B cell (primary cell): ENCODE measurements at regions of chrX and their contacts with region 1.

Region 1: GRCh38 chrX:123960042-123960611 is 1.4 kb upstream of the STAG2 start:
- DNase-seq: peak; percentile 93
- ATAC-seq: peak; percentile 74
- H3K4me3 ChIP-seq: peak overlapping the region; percentile 71 to 93 (median 91)
- H3K4me3 Mint-ChIP-seq: peak overlapping the region; percentile 88
- H3K27ac ChIP-seq: peak overlapping the region; percentile 94 to 100
- H3K27ac Mint-ChIP-seq: peak overlapping the region; percentile 94
- H3K4me1 ChIP-seq: peaks cover 7 to 14% of the 10 kb centered on the region in 2 donors
- H3K4me1 Mint-ChIP-seq: peaks cover 18% of the 10 kb centered on the region
- H3K27me3 ChIP-seq: no peaks in the 10 kb centered on the region
- H3K27me3 Mint-ChIP-seq: no peaks in the 10 kb centered on the region
- CTCF ChIP-seq: peak; percentile 77

Region 2: GRCh38 chrX:123833387-123833786 is 126.7 kb before region 1 on chrX:
- CTCF ChIA-PET with region 1: interaction called, 15 read pairs
- POLR2A ChIA-PET with region 1: no interaction called
- intact Hi-C with region 1: loop called (anchors 1 kb)
- DNase-seq: peak; percentile 70
- ATAC-seq: peak; percentile 72
- H3K4me3 ChIP-seq: no peak overlapping the region
- H3K4me3 Mint-ChIP-seq: no peak overlapping the region
- H3K27ac ChIP-seq: no peak overlapping the region
- H3K27ac Mint-ChIP-seq: no peak overlapping the region
- H3K4me1 ChIP-seq: peaks cover 11 to 18% of the 10 kb centered on the region in 2 donors
- H3K4me1 Mint-ChIP-seq: peaks cover 18% of the 10 kb centered on the region
- H3K27me3 ChIP-seq: no peaks in the 10 kb centered on the region
- H3K27me3 Mint-ChIP-seq: no peaks in the 10 kb centered on the region
- CTCF ChIP-seq: peak; percentile 78

Region 3: DNA sequence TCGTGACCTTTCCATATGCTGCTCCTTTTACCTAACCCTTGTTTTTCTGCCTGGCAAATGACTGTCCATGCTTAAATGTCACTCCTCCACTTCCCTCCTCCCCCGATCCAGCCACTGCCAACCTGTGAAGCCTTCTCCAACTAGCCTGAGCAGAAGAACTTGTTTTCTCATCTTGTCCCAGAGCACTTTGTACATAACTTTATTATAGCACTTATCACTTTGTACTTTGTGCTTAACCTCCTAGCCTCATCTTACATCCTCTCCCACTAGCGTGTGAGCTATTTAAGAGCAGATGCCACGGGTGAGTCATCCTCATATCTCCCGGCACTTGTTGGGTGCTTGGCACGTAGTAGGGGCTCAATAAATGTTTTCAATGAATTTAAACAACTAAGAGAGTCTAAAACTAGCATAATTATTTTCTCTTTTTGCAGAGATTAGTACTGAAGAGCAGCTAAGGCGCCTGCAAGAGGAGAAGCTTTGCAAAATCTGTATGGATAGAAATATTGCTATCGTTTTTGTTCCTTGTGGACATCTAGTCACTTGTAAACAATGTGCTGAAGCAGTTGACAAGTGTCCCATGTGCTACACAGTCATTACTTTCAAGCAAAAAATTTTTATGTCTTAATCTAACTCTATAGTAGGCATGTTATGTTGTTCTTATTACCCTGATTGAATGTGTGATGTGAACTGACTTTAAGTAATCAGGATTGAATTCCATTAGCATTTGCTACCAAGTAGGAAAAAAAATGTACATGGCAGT is 53.4 kb before region 1 on chrX:
- CTCF ChIA-PET with region 1: no interaction called
- POLR2A ChIA-PET with region 1: no interaction called
- intact Hi-C with region 1: loop called (anchors 5 kb)
- DNase-seq: no peak
- ATAC-seq: no peak
- H3K4me3 ChIP-seq: no peak overlapping the region
- H3K4me3 Mint-ChIP-seq: peak overlapping the region; percentile 6
- H3K27ac ChIP-seq: peak overlapping the region; percentile 24 to 62
- H3K27ac Mint-ChIP-seq: peak overlapping the region; percentile 86
- H3K4me1 ChIP-seq: peaks cover 24 to 27% of the 10 kb centered on the region in 2 donors
- H3K4me1 Mint-ChIP-seq: peaks cover 30% of the 10 kb centered on the region
- H3K27me3 ChIP-seq: no peaks in the 10 kb centered on the region
- H3K27me3 Mint-ChIP-seq: no peaks in the 10 kb centered on the region
- CTCF ChIP-seq: no peak

Region 4: GRCh38 chrX:124018023-124018422 is 57.9 kb after region 1 on chrX:
- CTCF ChIA-PET with region 1: interaction called, 18 read pairs
- POLR2A ChIA-PET with region 1: interaction called, 7 read pairs
- intact Hi-C with region 1: loop called (anchors 1 kb)
- DNase-seq: peak; percentile 22
- ATAC-seq: no peak
- H3K4me3 ChIP-seq: no peak overlapping the region
- H3K4me3 Mint-ChIP-seq: no peak overlapping the region
- H3K27ac ChIP-seq: no peak overlapping the region
- H3K27ac Mint-ChIP-seq: peak overlapping the region; percentile 50
- H3K4me1 ChIP-seq: no peaks in the 10 kb centered on the region
- H3K4me1 Mint-ChIP-seq: peaks cover 34% of the 10 kb centered on the region
- H3K27me3 ChIP-seq: no peaks in the 10 kb centered on the region
- H3K27me3 Mint-ChIP-seq: no peaks in the 10 kb centered on the region
- CTCF ChIP-seq: peak; percentile 26